Activated naive CD4-positive, alpha-beta T cell treated with anti-CD3 and anti-CD28 coated beads for 36 hours (primary cell): ENCODE measurements at regions of chr1 and their contacts with region 1.

Region 1: GRCh38 chr1:24964811-24965570 is 34.9 kb upstream of the RUNX3 start:
- DNase-seq: peak; percentile 97
- H3K4me3 Mint-ChIP-seq: peak overlapping the region; percentile 92
- H3K27ac Mint-ChIP-seq: peak overlapping the region; percentile 98
- H3K4me1 Mint-ChIP-seq: peaks cover 82% of the 10 kb centered on the region
- H3K27me3 Mint-ChIP-seq: no peaks in the 10 kb centered on the region

Region 2: GRCh38 chr1:24018611-24019580 is 946.1 kb before region 1 on chr1:
- CTCF ChIA-PET with region 1: no interaction called
- intact Hi-C with region 1: no loop called
- DNase-seq: no peak
- H3K4me3 Mint-ChIP-seq: no peak overlapping the region
- H3K27ac Mint-ChIP-seq: no peak overlapping the region
- H3K4me1 Mint-ChIP-seq: no peaks in the 10 kb centered on the region
- H3K27me3 Mint-ChIP-seq: peaks cover 2% of the 10 kb centered on the region

Region 3: GRCh38 chr1:24930204-24931145 is 34.5 kb before region 1 on chr1 and contains the start of gene RUNX3:
- CTCF ChIA-PET with region 1: interaction called, 11 read pairs
- intact Hi-C with region 1: loop called (anchors 1 kb)
- DNase-seq: peak; percentile 93
- H3K4me3 Mint-ChIP-seq: peak within 1 kb of the TSS; percentile 94
- H3K27ac Mint-ChIP-seq: peak within 1 kb of the TSS; percentile 92
- H3K4me1 Mint-ChIP-seq: peaks cover 66% of the 10 kb centered on the region
- H3K27me3 Mint-ChIP-seq: no peaks in the 10 kb centered on the region
- total RNA-seq, gene RUNX3: 72.3 to 83.8 TPM

Region 4: GRCh38 chr1:24978383-24979032 is 13.5 kb after region 1 on chr1:
- CTCF ChIA-PET with region 1: interaction called, 13 read pairs
- intact Hi-C with region 1: loop called (anchors 2 kb)
- DNase-seq: no peak
- H3K4me3 Mint-ChIP-seq: no peak overlapping the region
- H3K27ac Mint-ChIP-seq: peak overlapping the region; percentile 40
- H3K4me1 Mint-ChIP-seq: peaks cover 65% of the 10 kb centered on the region
- H3K27me3 Mint-ChIP-seq: no peaks in the 10 kb centered on the region

Region 5: GRCh38 chr1:24987875-24988557 is 23.0 kb after region 1 on chr1:
- CTCF ChIA-PET with region 1: interaction called, 6 read pairs
- intact Hi-C with region 1: loop called (anchors 1 kb)
- DNase-seq: peak; percentile 73
- H3K4me3 Mint-ChIP-seq: no peak overlapping the region
- H3K27ac Mint-ChIP-seq: peak overlapping the region; percentile 84
- H3K4me1 Mint-ChIP-seq: peaks cover 95% of the 10 kb centered on the region
- H3K27me3 Mint-ChIP-seq: no peaks in the 10 kb centered on the region

Region 6: GRCh38 chr1:25239681-25240541 is 274.9 kb after region 1 on chr1:
- CTCF ChIA-PET with region 1: no interaction called
- intact Hi-C with region 1: loop called (anchors 10 kb)
- DNase-seq: peak; percentile 96
- H3K4me3 Mint-ChIP-seq: peak overlapping the region; percentile 91
- H3K27ac Mint-ChIP-seq: peak overlapping the region; percentile 99
- H3K4me1 Mint-ChIP-seq: peaks cover 48% of the 10 kb centered on the region
- H3K27me3 Mint-ChIP-seq: no peaks in the 10 kb centered on the region